GM23248 (cell line): ENCODE measurements at regions of chr13 and their contacts with region 1.

Region 1: DNA sequence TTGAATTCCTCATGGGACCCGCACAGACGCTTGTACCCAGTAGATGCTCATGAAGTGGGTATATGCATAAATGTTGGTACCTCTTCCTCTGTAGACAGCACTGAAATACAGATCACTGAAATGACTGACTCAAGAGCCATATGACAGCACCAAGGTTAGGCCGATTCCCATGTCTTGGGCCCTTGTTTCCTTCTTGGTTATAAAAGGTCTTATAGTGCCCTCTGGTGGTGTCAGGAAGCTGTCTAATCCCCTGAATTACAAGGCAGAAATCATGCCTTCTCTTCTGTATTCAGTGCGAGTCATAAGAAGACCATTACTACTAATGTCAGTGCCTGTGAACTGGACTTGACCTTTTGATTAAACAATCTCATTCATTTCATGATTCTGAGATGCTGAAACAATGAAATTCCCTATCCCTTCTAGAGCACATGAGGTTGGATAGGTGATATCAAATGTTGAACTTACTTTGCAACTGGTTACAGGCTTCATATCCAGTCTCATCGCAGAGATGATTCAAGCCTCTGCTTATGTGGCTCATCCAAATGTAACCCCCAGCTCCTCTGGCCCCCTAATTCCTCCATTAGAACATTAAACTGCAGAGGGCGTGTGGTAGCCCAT is 59.7 kb downstream of the SPATA13 start:
- DNase-seq: peak; percentile 92
- H3K4me3 ChIP-seq: no peak overlapping the region
- H3K27ac ChIP-seq: no peak overlapping the region
- H3K4me1 ChIP-seq: 0 out of 2 replicates have a peak, but pooled peaks cover 5% of the 10 kb centered on the region
- H3K27me3 ChIP-seq: no peaks in the 10 kb centered on the region

Region 2: DNA sequence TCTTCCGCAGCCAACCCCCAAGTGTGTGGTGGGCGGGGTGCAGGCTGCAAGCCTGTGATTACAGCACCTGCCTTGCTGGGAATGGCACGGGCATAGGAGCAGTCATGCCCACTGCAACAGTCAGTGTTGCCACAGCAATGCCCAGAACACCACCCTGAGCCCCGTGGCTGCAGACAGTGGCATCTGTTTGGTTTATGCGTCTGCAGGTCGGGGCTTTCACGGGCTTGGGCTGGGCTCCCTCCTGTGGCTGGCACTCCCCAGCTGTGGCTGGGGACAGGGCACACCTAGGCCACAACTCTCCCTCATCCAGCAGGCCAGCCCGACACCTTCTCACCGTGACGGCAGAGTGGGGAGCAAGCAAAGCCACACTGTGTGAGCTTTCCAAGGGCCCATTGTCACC is 207.5 kb before region 1 on chr13:
- in situ Hi-C with region 1: loop called (anchors 10 kb)
- DNase-seq: no peak
- H3K4me3 ChIP-seq: no peak overlapping the region
- H3K27ac ChIP-seq: no peak overlapping the region
- H3K4me1 ChIP-seq: 0 out of 2 replicates have a peak, but pooled peaks cover 11% of the 10 kb centered on the region
- H3K27me3 ChIP-seq: no peaks in the 10 kb centered on the region

Region 3: GRCh38 chr13:24540236-24541126 is 320.3 kb after region 1 on chr13:
- in situ Hi-C with region 1: no loop called
- DNase-seq: no peak
- H3K4me3 ChIP-seq: no peak overlapping the region
- H3K27ac ChIP-seq: no peak overlapping the region
- H3K4me1 ChIP-seq: no peaks in the 10 kb centered on the region
- H3K27me3 ChIP-seq: peaks cover 34% of the 10 kb centered on the region

Region 4: GRCh38 chr13:25372284-25373081 is 1152.3 kb after region 1 on chr13:
- in situ Hi-C with region 1: no loop called
- DNase-seq: peak; percentile 14
- H3K4me3 ChIP-seq: peak overlapping the region; percentile 47; the same call in 1 of the 2 replicates
- H3K27ac ChIP-seq: no peak overlapping the region
- H3K4me1 ChIP-seq: no peaks in the 10 kb centered on the region
- H3K27me3 ChIP-seq: peaks cover 69% of the 10 kb centered on the region